H1 (cell line): ENCODE measurements at regions of chr6 and their contacts with region 1.

Region 1: GRCh38 chr6:75284632-75285286 is at the start of gene TMEM30A:
- DNase-seq: peak; percentile 93 to 98
- H3K4me3 ChIP-seq: peak within 1 kb of the TSS; percentile 74 to 99 (median 98)
- H3K27ac ChIP-seq: peak within 1 kb of the TSS; percentile 44; the same call in 1 of the 2 replicates
- H3K4me1 ChIP-seq: peaks cover 0 to 10% (median 0%) of the 10 kb centered on the region in 4 experiments; a peak in 2 of 7 replicates
- H3K27me3 ChIP-seq: no peaks in the 10 kb centered on the region
- CTCF ChIP-seq: no peak
- EP300 ChIP-seq: peak in 1 of 2 experiments; percentile 79; a peak in 1 of 3 replicates
- POLR2A ChIP-seq: peak; percentile 43 to 77
- RAD21 ChIP-seq: 0 out of 4 replicates have a peak, but pooled peaks of 1 of the 2 experiments have one; percentile 1
- total RNA-seq, gene TMEM30A: 65.8 and 71.0 TPM in 2 replicates

Region 2: DNA sequence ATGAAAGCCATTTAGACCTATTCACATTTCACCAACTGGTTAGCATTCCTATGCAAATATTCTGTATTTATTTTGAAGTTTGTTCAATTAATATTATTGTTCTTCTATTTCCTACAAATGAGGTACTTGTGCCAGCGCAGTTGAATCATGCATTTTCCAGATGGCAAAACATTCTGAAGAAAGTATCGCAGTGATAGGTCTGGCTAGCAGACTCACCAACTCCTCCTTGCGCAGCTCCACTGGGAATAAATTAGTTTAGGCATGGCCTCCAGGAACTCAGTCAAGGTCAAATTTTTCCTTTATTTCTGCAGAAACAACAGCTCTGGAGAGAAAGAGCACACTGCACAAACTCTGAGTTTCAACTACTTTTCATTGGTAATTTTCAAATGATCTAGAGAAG is 516.6 kb before region 1 on chr6:
- CTCF ChIA-PET with region 1: no interaction called
- POLR2A ChIA-PET with region 1: no interaction called
- DNase-seq: no peak
- H3K4me3 ChIP-seq: no peak overlapping the region
- H3K27ac ChIP-seq: no peak overlapping the region
- H3K4me1 ChIP-seq: no peaks in the 10 kb centered on the region
- H3K27me3 ChIP-seq: no peaks in the 10 kb centered on the region
- CTCF ChIP-seq: no peak
- EP300 ChIP-seq: no peak
- POLR2A ChIP-seq: no peak
- RAD21 ChIP-seq: no peak

Region 3: DNA sequence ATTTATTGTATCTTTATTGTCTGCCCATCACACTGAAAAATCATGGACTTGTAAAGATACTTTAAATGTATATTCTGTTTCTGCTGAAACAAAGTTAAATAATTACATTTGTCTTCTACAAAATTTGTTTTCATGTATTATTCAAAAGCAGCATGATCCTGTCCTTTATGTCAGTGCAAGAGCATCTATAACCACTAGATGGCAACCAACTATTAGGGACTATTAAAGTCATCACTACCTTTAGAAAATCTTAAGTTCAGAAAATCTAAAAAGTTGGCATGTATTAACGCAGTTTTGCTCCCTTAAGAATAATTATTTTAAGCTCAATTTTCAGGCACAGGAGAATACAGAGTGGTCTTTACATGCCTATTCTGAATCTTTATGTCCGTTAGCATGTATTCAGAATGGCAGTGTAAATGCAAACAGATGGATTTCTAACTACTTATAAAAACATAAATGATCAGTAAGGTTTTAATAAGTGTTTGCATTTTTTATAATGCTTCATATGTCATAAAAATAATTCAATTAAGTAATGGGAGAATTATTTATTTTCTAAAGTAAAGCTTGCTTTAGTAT is 18.0 kb before region 1 on chr6:
- CTCF ChIA-PET with region 1: interaction called, 66 read pairs
- POLR2A ChIA-PET with region 1: interaction called, 10 read pairs
- DNase-seq: no peak
- H3K4me3 ChIP-seq: no peak overlapping the region
- H3K27ac ChIP-seq: no peak overlapping the region
- H3K4me1 ChIP-seq: peaks cover 2 to 9% (median 7%) of the 10 kb centered on the region in 4 experiments; a peak in 5 of 7 replicates
- H3K27me3 ChIP-seq: no peaks in the 10 kb centered on the region
- CTCF ChIP-seq: peak in 1 of 3 experiments; percentile 63; a peak in 2 of 4 replicates
- EP300 ChIP-seq: no peak
- POLR2A ChIP-seq: no peak
- RAD21 ChIP-seq: peak; percentile 60 to 66

Region 4: GRCh38 chr6:75300531-75300855 is 15.7 kb after region 1 on chr6:
- CTCF ChIA-PET with region 1: no interaction called
- POLR2A ChIA-PET with region 1: no interaction called
- DNase-seq: no peak
- H3K4me3 ChIP-seq: no peak overlapping the region
- H3K27ac ChIP-seq: no peak overlapping the region
- H3K4me1 ChIP-seq: peaks cover 2 to 6% (median 2%) of the 10 kb centered on the region in 4 experiments; a peak in 3 of 7 replicates
- H3K27me3 ChIP-seq: no peaks in the 10 kb centered on the region
- CTCF ChIP-seq: no peak
- EP300 ChIP-seq: no peak
- POLR2A ChIP-seq: no peak
- RAD21 ChIP-seq: no peak

Region 5: DNA sequence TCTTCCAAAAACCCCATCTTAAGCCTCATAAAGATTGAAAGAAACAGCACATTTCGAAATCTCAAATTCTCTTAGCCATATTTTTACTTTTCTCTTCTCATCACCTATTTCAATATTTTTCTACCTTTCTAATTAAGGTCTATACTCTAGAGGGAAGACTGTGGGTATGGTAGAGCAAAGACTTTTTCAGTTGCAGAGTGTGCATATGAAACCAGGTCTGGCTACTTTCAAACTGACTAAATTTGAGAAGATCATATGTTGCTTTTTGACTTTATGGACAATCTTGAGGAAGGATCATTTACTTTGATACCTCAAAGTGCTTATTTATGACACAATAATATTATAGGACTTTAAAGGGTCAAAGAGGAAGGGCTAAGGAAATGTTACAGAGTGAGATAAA is 188.1 kb after region 1 on chr6:
- CTCF ChIA-PET with region 1: no interaction called
- POLR2A ChIA-PET with region 1: no interaction called
- DNase-seq: no peak
- H3K4me3 ChIP-seq: no peak overlapping the region
- H3K27ac ChIP-seq: no peak overlapping the region
- H3K4me1 ChIP-seq: peaks cover 0 to 2% (median 0%) of the 10 kb centered on the region in 4 experiments; a peak in 2 of 7 replicates
- H3K27me3 ChIP-seq: no peaks in the 10 kb centered on the region
- CTCF ChIP-seq: no peak
- EP300 ChIP-seq: no peak
- POLR2A ChIP-seq: no peak
- RAD21 ChIP-seq: no peak

Region 6: DNA sequence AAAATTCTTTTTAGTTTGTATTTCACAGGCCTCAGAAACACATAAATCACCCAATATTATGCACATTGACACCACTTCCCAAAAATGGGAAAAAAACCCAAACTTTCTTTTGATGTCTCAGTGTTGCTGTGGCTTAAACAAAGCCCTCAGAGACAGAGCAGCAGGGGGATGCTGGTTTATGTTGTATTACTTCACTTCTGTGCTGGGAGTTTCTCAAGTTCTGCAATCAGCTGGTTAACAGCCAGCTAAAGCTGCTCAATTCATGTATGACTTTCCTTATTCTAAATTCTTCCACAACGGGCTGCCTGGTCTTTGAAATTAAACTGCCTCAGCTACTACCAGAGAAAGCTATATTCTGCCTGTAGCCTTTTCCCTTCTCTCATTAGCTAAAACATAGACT is 203.3 kb after region 1 on chr6:
- CTCF ChIA-PET with region 1: no interaction called
- POLR2A ChIA-PET with region 1: no interaction called
- DNase-seq: no peak
- H3K4me3 ChIP-seq: no peak overlapping the region
- H3K27ac ChIP-seq: no peak overlapping the region
- H3K4me1 ChIP-seq: peaks cover 0 to 3% (median 0%) of the 10 kb centered on the region in 4 experiments; a peak in 2 of 7 replicates
- H3K27me3 ChIP-seq: no peaks in the 10 kb centered on the region
- CTCF ChIP-seq: no peak
- EP300 ChIP-seq: no peak
- POLR2A ChIP-seq: no peak
- RAD21 ChIP-seq: no peak